Esophagus squamous epithelium (tissue), 5 donors: ENCODE measurements at regions of chr22 and their contacts with region 1.

Region 1: GRCh38 chr22:24247011-24247507 is 2.2 kb upstream of the GGT5 start:
- DNase-seq: no peak
- H3K4me3 ChIP-seq: no peak overlapping the region
- H3K27ac ChIP-seq: peak overlapping the region; percentile 57 to 92 (median 82)
- H3K4me1 ChIP-seq: peaks cover 3 to 54% (median 41%) of the 10 kb centered on the region in 3 donors
- H3K27me3 ChIP-seq: no peaks in the 10 kb centered on the region
- CTCF ChIP-seq: no peak
- POLR2A ChIP-seq: no peak

Region 2: DNA sequence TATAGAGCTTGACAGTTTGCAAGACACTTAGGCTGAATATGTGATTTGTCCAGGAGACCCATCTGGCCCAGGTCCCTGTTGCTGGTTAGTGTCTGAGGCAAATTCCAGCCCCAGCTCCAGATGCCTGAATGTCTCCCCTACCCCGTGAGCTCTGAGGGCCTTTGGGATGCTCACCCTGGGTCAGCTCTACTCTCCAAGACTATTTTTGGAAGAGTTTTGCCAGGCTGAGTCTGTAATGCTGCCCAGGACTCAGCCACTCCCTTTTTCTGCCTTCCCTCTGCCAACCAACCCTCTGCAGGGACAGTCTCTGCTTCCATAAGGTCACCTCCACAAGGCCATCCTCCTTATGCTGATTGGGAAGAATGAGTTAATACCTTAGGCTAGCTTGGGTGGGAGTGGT is 169.6 kb before region 1 on chr22:
- intact Hi-C with region 1: no loop called
- DNase-seq: no peak
- H3K4me3 ChIP-seq: no peak overlapping the region
- H3K27ac ChIP-seq: no peak overlapping the region
- H3K4me1 ChIP-seq: no peaks in the 10 kb centered on the region
- H3K27me3 ChIP-seq: no peaks in the 10 kb centered on the region
- CTCF ChIP-seq: no peak
- POLR2A ChIP-seq: no peak

Region 3: DNA sequence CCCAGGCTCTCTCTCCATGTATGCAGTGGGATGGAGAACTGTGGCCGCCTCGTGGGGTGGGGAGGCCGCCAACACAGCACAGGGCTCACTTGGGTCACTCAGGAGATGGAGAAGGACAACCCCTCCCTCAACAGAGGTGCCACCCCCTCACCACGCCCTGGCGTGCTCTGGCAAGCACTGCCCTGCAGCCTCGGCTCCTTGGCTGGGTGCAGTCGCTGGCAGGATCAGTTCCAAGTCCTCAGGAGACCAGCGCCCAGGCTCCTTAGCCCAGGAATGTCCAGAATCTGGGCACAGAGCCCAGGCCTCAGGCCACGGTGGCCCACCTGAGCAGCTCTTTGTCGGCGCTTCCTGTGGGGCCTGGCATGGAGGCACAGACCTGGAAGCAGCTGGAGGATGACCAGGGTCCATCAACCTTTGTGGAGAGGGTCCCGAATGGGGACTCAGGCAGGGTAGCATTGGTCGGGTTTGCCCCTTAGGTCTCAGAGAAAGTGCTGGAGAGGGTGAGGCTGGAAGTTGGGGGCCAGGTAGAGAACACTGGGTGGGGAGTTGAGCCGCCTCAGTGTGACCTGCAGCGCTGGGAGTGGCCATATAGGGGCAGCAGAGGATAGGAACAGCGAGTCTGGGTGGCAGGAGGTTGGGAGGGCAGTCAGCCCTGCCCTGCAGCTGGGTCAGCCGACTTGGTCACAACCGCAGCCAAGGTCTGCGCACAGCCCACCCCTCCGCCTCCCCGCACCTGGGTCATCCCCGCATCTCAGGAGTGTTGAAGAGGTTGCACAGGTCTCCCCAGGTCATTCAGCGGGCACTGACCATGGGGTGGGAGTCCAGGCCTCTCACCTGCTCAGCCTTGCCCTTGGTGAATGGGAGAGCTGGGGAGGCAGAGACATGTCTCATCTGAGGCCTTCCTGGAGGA is 57.6 kb before region 1 on chr22:
- intact Hi-C with region 1: loop called (anchors 5 kb)
- DNase-seq: no peak
- H3K4me3 ChIP-seq: no peak overlapping the region
- H3K27ac ChIP-seq: peak overlapping the region in 1 of 4 donors; percentile 5
- H3K4me1 ChIP-seq: peaks cover 14 to 29% (median 19%) of the 10 kb centered on the region in 3 donors
- H3K27me3 ChIP-seq: no peaks in the 10 kb centered on the region
- CTCF ChIP-seq: peak; percentile 68 to 95 (median 86)
- POLR2A ChIP-seq: no peak